ENCODE measurements at regions of chr1 and their contacts with region 1.

Region 1: DNA sequence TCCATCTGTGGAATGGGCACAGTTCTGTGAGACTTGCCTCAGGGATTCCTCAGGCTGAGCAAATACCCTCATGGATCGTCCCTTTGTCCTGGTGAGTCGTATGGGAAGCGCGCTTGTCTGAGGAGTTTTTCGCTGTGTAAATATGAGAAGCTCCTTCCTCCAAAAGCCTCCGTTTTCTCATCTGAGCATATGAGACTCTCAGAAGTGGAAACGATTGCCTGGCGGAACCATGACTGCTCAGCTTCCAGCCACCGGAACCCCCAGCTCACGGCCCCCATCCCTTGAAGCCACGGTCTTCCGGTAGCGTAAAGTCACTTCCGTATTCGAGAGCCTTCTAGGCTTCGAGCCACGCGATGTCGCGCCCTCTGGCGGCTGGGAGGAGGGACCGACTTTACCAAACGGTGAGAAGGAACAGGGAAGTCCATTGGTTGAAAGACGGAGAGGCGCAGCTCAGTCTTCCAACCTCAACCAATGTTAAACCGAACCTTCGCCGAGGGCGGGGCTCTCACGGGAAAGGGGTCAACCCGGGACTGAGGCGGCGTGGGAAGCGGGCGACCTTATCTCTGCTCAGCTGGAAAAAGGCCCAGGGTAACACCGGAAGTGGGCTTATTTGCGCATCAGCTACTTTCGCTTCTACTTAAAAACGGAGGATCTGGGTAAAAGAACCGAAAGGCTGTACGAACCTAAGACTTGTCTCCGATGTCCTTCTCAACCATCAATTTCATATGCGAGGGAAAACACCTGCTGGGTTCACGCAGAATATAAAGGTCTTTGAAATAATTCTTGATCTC is 46.2 kb downstream of the AZIN2 start:
- DNase-seq: peak; percentile 98 to 99
- ATAC-seq: peak; percentile 98 to 99 (median 99)
- H3K4me3 ChIP-seq: peak overlapping the region; percentile 41 to 88 (median 74)
- H3K27ac ChIP-seq: peak overlapping the region; percentile 59 to 93 (median 86)
- H3K4me1 ChIP-seq: peaks cover 0 to 28% (median 22%) of the 10 kb centered on the region in 9 donors
- H3K27me3 ChIP-seq: no peaks in the 10 kb centered on the region
- CTCF ChIP-seq: peak; percentile 77 to 98 (median 96)

Region 2: DNA sequence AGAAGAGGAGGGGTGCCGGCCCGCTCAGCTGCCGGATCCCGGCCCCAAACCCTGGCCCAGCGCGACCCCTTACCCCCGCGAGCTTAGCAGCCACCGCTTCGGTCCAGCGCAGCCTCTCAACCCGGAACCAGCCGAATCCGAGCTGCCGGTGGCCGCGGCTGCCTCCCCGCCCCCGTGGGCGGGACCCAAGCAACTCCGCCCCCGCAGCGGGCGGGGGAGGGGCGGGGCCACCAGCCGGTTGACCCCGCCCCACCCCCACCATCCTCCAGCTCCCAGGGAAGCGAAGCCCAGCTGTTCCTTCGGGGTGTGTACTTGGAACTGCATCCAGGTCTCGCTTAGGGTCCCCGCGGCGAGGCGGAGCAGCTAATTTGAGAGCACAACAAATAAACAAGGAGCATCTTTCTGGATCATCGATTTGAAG is 54.7 kb after region 1 on chr1 and contains the start of gene TRIM62:
- intact Hi-C with region 1: loop called in 2 of 10 experiments (anchors 1 to 5 kb)
- DNase-seq: peak; percentile 90 to 91
- ATAC-seq: peak; percentile 88 to 95 (median 90)
- H3K4me3 ChIP-seq: peak within 1 kb of the TSS; percentile 75 to 95 (median 90)
- H3K27ac ChIP-seq: peak within 1 kb of the TSS in 9 of 10 donors; percentile 65 to 86 (median 79)
- H3K4me1 ChIP-seq: peaks cover 3 to 26% (median 16%) of the 10 kb centered on the region in 9 donors
- H3K27me3 ChIP-seq: peaks cover 0 to 9% (median 0%) of the 10 kb centered on the region in 7 donors
- CTCF ChIP-seq: no peak
- total RNA-seq, gene TRIM62: 2.0 to 3.7 (median 2.8) TPM

Region 3: GRCh38 chr1:33256701-33257399 is 129.7 kb after region 1 on chr1:
- intact Hi-C with region 1: loop called in 1 of 10 experiments (anchors 10 kb)
- DNase-seq: peak; percentile 53 to 60
- ATAC-seq: peak; percentile 32 to 56 (median 40)
- H3K4me3 ChIP-seq: peak overlapping the region; percentile 61 to 86 (median 75)
- H3K27ac ChIP-seq: peak overlapping the region; percentile 79 to 94 (median 88)
- H3K4me1 ChIP-seq: peaks cover 35 to 56% (median 53%) of the 10 kb centered on the region in 9 donors
- H3K27me3 ChIP-seq: no peaks in the 10 kb centered on the region
- CTCF ChIP-seq: no peak

Region 4: DNA sequence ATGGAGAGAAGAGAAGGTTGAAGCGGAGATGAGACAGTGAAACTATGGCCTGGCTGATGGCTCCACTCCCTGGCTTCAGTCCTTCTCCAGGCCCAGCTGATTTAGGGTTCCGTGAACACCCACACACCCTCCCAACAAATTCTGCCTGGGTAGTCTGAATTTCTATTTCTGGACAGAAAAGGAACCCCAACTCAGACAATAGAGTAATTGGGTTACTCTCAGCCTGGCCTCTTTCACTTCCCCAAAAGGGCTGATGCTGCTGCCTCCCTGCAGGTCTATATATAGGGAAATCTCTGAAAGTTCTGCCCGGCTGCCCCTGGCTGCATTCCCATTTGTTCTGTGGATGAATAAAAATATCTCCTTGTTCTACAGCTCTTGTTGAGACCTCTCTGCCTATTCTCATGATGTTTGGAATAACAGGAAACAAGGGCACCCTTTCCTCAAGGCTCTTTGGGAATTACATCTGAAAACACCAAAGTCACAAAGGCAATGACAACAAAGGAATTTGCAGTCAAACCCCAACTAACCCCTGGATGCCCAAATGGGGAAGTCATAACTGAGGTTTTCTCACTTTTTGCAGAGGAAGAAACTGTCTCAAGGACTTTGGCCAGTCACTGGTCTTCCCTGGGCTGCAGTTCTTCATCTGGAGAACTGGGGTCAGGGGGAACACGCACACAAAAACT is 333.9 kb after region 1 on chr1:
- intact Hi-C with region 1: loop called in 2 of 10 experiments (anchors 10 kb)
- DNase-seq: peak; percentile 44 to 77
- ATAC-seq: peak; percentile 61 to 87 (median 75)
- H3K4me3 ChIP-seq: no peak overlapping the region
- H3K27ac ChIP-seq: peak overlapping the region; percentile 59 to 93 (median 84)
- H3K4me1 ChIP-seq: peaks cover 2 to 74% (median 35%) of the 10 kb centered on the region in 9 donors
- H3K27me3 ChIP-seq: no peaks in the 10 kb centered on the region
- CTCF ChIP-seq: no peak

Region 5: GRCh38 chr1:33472349-33472980 is 345.3 kb after region 1 on chr1 and contains the start of gene ZSCAN20:
- intact Hi-C with region 1: loop called in 5 of 10 experiments (anchors 1 to 10 kb)
- DNase-seq: peak; percentile 98 to 99
- ATAC-seq: peak; percentile 89 to 97 (median 94)
- H3K4me3 ChIP-seq: peak within 1 kb of the TSS; percentile 19 to 77 (median 64)
- H3K27ac ChIP-seq: peak within 1 kb of the TSS; percentile 59 to 92 (median 84)
- H3K4me1 ChIP-seq: peaks cover 3 to 65% (median 41%) of the 10 kb centered on the region in 9 donors
- H3K27me3 ChIP-seq: no peaks in the 10 kb centered on the region
- CTCF ChIP-seq: no peak
- total RNA-seq, gene ZSCAN20: 3.4 to 9.3 (median 5.8) TPM